Activated CD8-positive, alpha-beta T cell treated with anti-CD3 and anti-CD28 coated beads for 36 hours (primary cell): ENCODE measurements at regions of chr9 and their contacts with region 1.

Region 1: GRCh38 chr9:21326526-21327139 is 8.6 kb downstream of the KLHL9 start:
- DNase-seq: no peak
- ATAC-seq: peak; percentile 79
- H3K4me3 Mint-ChIP-seq: no peak overlapping the region
- H3K27ac Mint-ChIP-seq: no peak overlapping the region
- H3K4me1 Mint-ChIP-seq: peaks cover 42% of the 10 kb centered on the region
- H3K27me3 Mint-ChIP-seq: no peaks in the 10 kb centered on the region
- CTCF ChIP-seq: peak; percentile 68

Region 2: GRCh38 chr9:20728493-20729220 is 598.0 kb before region 1 on chr9:
- CTCF ChIA-PET with region 1: no interaction called
- POLR2A ChIA-PET with region 1: no interaction called
- intact Hi-C with region 1: no loop called
- DNase-seq: no peak
- ATAC-seq: no peak
- H3K4me3 Mint-ChIP-seq: no peak overlapping the region
- H3K27ac Mint-ChIP-seq: no peak overlapping the region
- H3K4me1 Mint-ChIP-seq: peaks cover 18% of the 10 kb centered on the region
- H3K27me3 Mint-ChIP-seq: no peaks in the 10 kb centered on the region
- CTCF ChIP-seq: no peak

Region 3: DNA sequence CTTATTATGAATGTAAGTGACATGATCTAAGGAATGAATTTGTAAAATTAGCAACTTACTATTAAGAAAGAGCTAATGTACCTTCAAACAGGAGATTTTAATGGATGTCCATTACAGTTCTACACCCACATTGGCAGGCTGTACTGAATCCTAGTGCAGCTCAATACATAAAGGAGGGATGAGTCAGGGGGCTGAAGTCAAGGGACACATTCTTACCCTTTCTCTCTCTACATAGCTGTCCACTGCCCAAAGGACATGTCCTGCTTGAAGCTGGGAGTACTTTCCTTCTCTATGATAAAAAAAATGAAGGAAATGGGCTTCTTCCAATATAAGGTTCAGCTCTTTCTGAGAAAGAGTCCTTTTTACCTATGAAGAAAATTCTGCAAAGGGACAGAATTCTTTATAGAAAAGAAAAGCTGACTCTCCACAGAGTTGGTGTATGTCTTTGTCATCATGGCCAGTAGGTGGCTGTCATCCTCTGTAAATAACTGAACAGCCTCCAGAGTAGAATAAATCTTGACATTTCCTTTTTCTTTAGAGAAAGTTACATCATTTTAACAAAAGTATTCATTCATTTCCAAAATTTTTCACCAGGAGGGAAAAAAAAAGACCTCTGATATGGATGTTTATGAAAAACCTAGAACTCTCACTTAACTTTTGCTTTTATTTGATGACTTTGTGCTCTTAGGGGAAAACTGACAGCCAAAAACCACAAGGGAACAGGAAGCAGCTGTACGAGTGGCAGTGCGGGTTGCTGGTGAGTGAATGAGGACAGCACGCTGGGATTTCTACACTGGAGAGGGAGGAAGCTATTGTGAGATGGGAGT is 73.7 kb before region 1 on chr9:
- CTCF ChIA-PET with region 1: interaction called, 12 read pairs
- POLR2A ChIA-PET with region 1: no interaction called
- intact Hi-C with region 1: no loop called
- DNase-seq: peak; percentile 37
- ATAC-seq: peak; percentile 67
- H3K4me3 Mint-ChIP-seq: no peak overlapping the region
- H3K27ac Mint-ChIP-seq: no peak overlapping the region
- H3K4me1 Mint-ChIP-seq: peaks cover 5% of the 10 kb centered on the region
- H3K27me3 Mint-ChIP-seq: peaks cover 3% of the 10 kb centered on the region
- CTCF ChIP-seq: peak; percentile 56

Region 4: GRCh38 chr9:21402386-21403251 is 76.0 kb after region 1 on chr9:
- CTCF ChIA-PET with region 1: interaction called, 27 read pairs
- POLR2A ChIA-PET with region 1: interaction called, 3 read pairs
- intact Hi-C with region 1: loop called (anchors 5 kb)
- DNase-seq: peak; percentile 28
- ATAC-seq: peak; percentile 34
- H3K4me3 Mint-ChIP-seq: peak overlapping the region; percentile 61
- H3K27ac Mint-ChIP-seq: no peak overlapping the region
- H3K4me1 Mint-ChIP-seq: peaks cover 9% of the 10 kb centered on the region
- H3K27me3 Mint-ChIP-seq: peaks cover 46% of the 10 kb centered on the region
- CTCF ChIP-seq: peak; percentile 12

Region 5: GRCh38 chr9:21434202-21435014 is 107.8 kb after region 1 on chr9:
- CTCF ChIA-PET with region 1: interaction called, 16 read pairs
- POLR2A ChIA-PET with region 1: interaction called, 3 read pairs
- intact Hi-C with region 1: no loop called
- DNase-seq: peak; percentile 76
- ATAC-seq: no peak
- H3K4me3 Mint-ChIP-seq: no peak overlapping the region
- H3K27ac Mint-ChIP-seq: no peak overlapping the region
- H3K4me1 Mint-ChIP-seq: no peaks in the 10 kb centered on the region
- H3K27me3 Mint-ChIP-seq: peaks cover 15% of the 10 kb centered on the region
- CTCF ChIP-seq: peak; percentile 40

Region 6: GRCh38 chr9:21443849-21444625 is 117.4 kb after region 1 on chr9:
- CTCF ChIA-PET with region 1: interaction called, 12 read pairs
- POLR2A ChIA-PET with region 1: no interaction called
- intact Hi-C with region 1: no loop called
- DNase-seq: peak; percentile 11
- ATAC-seq: peak; percentile 74
- H3K4me3 Mint-ChIP-seq: peak overlapping the region; percentile 0
- H3K27ac Mint-ChIP-seq: no peak overlapping the region
- H3K4me1 Mint-ChIP-seq: peaks cover 13% of the 10 kb centered on the region
- H3K27me3 Mint-ChIP-seq: no peaks in the 10 kb centered on the region
- CTCF ChIP-seq: no peak

Region 7: GRCh38 chr9:21455320-21455719 is 128.7 kb after region 1 on chr9:
- CTCF ChIA-PET with region 1: interaction called, 40 read pairs
- POLR2A ChIA-PET with region 1: no interaction called
- intact Hi-C with region 1: loop called (anchors 5 kb)
- DNase-seq: peak; percentile 20
- ATAC-seq: peak; percentile 82
- H3K4me3 Mint-ChIP-seq: no peak overlapping the region
- H3K27ac Mint-ChIP-seq: no peak overlapping the region
- H3K4me1 Mint-ChIP-seq: no peaks in the 10 kb centered on the region
- H3K27me3 Mint-ChIP-seq: peaks cover 4% of the 10 kb centered on the region
- CTCF ChIP-seq: peak; percentile 63